Sigmoid colon (tissue), 7 donors: ENCODE measurements at regions of chr4 and their contacts with region 1.

Region 1: GRCh38 chr4:81844717-81845116 is 373.0 kb upstream of the RASGEF1B start:
- DNase-seq: peak; percentile 79
- H3K4me3 ChIP-seq: no peak overlapping the region
- H3K27ac ChIP-seq: no peak overlapping the region
- H3K4me1 ChIP-seq: no peaks in the 10 kb centered on the region
- H3K27me3 ChIP-seq: no peaks in the 10 kb centered on the region
- CTCF ChIP-seq: peak; percentile 54 to 75 (median 68)
- EP300 ChIP-seq: no peak
- POLR2A ChIP-seq: no peak

Region 2: GRCh38 chr4:81405894-81406401 is 438.8 kb before region 1 on chr4:
- intact Hi-C with region 1: loop called (anchors 2 kb)
- DNase-seq: no peak
- H3K4me3 ChIP-seq: peak overlapping the region in 2 of 4 donors; percentile 3 to 6
- H3K27ac ChIP-seq: no peak overlapping the region
- H3K4me1 ChIP-seq: peaks cover 0 to 3% (median 1%) of the 10 kb centered on the region in 4 donors
- H3K27me3 ChIP-seq: no peaks in the 10 kb centered on the region
- CTCF ChIP-seq: peak; percentile 67 to 84 (median 69)
- EP300 ChIP-seq: no peak
- POLR2A ChIP-seq: no peak

Region 3: GRCh38 chr4:81635739-81636138 is 209.0 kb before region 1 on chr4:
- intact Hi-C with region 1: no loop called
- DNase-seq: peak; percentile 69
- H3K4me3 ChIP-seq: no peak overlapping the region
- H3K27ac ChIP-seq: no peak overlapping the region
- H3K4me1 ChIP-seq: peaks cover 0 to 10% (median 9%) of the 10 kb centered on the region in 4 donors
- H3K27me3 ChIP-seq: no peaks in the 10 kb centered on the region
- CTCF ChIP-seq: no peak
- EP300 ChIP-seq: no peak
- POLR2A ChIP-seq: no peak

Region 4: GRCh38 chr4:81747242-81747930 is 97.3 kb before region 1 on chr4:
- intact Hi-C with region 1: no loop called
- DNase-seq: no peak
- H3K4me3 ChIP-seq: no peak overlapping the region
- H3K27ac ChIP-seq: no peak overlapping the region
- H3K4me1 ChIP-seq: no peaks in the 10 kb centered on the region
- H3K27me3 ChIP-seq: no peaks in the 10 kb centered on the region
- CTCF ChIP-seq: no peak
- EP300 ChIP-seq: no peak
- POLR2A ChIP-seq: no peak

Region 5: DNA sequence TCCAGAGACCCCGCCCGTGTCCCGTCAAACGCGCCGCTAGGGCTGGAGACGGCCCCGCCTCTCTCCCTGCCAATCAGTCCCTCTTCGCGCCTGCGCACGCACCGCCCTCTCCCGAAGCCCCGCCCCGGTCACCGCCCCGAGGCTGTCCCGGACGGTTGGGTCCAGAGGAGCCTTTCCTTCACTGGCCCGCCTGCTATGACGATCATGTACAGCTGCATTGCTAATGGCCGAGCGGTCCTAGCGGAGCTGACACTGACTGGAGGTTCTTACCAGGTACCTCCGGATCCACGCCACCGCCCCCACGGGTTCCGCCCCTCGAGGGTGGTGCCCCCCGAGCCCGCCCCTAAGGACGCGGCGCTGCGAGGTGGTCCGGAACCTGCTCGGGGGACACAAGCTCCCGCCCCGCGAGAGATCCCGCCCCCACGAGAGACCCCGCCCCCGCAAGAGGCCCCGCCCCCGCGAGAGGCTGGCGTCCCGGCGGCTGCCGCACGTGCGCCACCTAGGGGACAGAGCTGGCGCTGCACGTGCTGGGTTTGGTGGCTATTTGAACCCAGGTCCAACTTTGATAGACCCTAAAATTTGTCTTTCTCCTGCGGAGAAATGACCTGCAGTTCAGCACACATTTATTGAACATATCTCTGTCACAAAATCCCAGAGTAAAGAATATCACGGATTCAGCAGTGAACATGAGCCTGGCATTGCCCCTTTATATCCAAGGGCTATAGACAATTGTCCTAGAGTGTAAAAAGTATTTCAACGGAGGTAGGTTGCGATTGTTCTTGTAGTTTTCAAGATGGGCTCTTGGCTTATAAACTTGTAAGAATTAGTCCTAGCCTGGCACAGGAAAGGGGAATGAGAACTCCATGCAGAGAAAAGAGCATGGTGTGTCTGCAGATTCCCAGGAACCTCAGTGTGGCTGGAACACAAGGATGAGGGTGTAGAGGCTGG is 440.4 kb after region 1 on chr4:
- intact Hi-C with region 1: loop called (anchors 10 kb)
- DNase-seq: peak; percentile 100
- H3K4me3 ChIP-seq: peak overlapping the region; percentile 24 to 50 (median 44)
- H3K27ac ChIP-seq: peak overlapping the region; percentile 63 to 76 (median 70)
- H3K4me1 ChIP-seq: peaks cover 0 to 5% (median 5%) of the 10 kb centered on the region in 4 donors
- H3K27me3 ChIP-seq: no peaks in the 10 kb centered on the region
- CTCF ChIP-seq: peak; percentile 65 to 98 (median 81)
- EP300 ChIP-seq: no peak
- POLR2A ChIP-seq: no peak